ENCODE measurements at regions of chr17 and their contacts with region 1.

Region 1: GRCh38 chr17:16363749-16364536 is 10.7 kb upstream of the CENPV start:
- DNase-seq: peak; percentile 77
- CTCF ChIP-seq: peak; percentile 92

Region 2: DNA sequence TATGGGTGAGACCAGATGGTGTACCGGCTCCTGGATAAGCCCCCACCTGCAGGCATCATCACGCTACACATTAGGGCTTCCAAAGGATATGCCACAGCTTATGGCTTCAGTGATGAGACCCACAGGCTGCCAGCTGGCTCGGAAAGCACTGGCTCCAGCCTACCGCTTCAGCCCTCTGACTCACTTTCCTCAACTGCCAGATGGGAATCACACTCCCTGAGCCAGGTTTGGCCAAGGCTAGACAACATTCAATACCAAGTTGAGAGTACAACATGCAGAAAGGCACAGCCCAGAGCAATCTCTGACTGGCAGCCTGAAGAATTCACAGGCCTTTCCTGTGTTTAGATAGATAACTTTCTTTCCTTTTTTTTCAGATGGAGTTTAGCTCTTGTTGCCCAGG is 21.0 kb before region 1 on chr17:
- CTCF ChIA-PET with region 1: interaction called, 112 read pairs
- POLR2A ChIA-PET with region 1: no interaction called
- DNase-seq: no peak
- CTCF ChIP-seq: no peak

Region 3: DNA sequence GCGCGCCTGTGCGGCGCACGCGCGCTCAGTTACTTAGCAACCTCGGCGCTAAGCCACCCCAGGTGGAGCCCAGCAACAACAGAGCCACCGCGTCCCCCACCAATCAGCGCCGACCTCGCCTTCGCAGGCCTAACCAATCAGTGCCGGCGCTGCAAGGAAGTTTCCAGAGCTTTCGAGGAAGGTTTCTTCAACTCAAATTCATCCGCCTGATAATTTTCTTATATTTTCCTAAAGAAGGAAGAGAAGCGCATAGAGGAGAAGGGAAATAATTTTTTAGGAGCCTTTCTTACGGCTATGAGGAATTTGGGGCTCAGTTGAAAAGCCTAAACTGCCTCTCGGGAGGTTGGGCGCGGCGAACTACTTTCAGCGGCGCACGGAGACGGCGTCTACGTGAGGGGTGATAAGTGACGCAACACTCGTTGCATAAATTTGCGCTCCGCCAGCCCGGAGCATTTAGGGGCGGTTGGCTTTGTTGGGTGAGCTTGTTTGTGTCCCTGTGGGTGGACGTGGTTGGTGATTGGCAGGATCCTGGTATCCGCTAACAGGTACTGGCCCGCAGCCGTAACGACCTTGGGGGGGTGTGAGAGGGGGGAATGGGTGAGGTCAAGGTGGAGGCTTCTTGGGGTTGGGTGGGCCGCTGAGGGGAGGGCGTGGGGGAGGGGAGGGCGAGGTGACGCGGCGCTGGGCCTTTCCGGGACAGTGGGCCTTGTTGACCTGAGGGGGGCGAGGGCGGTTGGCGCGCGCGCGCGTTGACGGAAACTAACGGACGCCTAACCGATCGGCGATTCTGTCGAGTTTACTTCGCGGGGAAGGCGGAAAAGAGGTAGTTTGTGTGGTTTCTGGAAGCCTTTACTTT is 16.9 kb after region 1 on chr17 and contains the start of gene UBB:
- CTCF ChIA-PET with region 1: interaction called, 43 read pairs
- POLR2A ChIA-PET with region 1: interaction called, 12 read pairs
- DNase-seq: peak; percentile 94
- CTCF ChIP-seq: peak; percentile 6

Region 4: GRCh38 chr17:16391451-16391850 is 27.5 kb after region 1 on chr17:
- CTCF ChIA-PET with region 1: no interaction called
- POLR2A ChIA-PET with region 1: no interaction called
- DNase-seq: no peak
- CTCF ChIP-seq: no peak

Region 5: GRCh38 chr17:16415031-16415924 is 51.3 kb after region 1 on chr17 and contains the start of gene TRPV2:
- CTCF ChIA-PET with region 1: interaction called, 69 read pairs
- POLR2A ChIA-PET with region 1: interaction called, 5 read pairs
- DNase-seq: peak; percentile 78
- CTCF ChIP-seq: peak; percentile 86

Region 6: GRCh38 chr17:16449121-16449570 is 85.2 kb after region 1 on chr17:
- CTCF ChIA-PET with region 1: interaction called, 22 read pairs
- POLR2A ChIA-PET with region 1: interaction called, 3 read pairs
- DNase-seq: no peak
- CTCF ChIP-seq: no peak

Region 7: DNA sequence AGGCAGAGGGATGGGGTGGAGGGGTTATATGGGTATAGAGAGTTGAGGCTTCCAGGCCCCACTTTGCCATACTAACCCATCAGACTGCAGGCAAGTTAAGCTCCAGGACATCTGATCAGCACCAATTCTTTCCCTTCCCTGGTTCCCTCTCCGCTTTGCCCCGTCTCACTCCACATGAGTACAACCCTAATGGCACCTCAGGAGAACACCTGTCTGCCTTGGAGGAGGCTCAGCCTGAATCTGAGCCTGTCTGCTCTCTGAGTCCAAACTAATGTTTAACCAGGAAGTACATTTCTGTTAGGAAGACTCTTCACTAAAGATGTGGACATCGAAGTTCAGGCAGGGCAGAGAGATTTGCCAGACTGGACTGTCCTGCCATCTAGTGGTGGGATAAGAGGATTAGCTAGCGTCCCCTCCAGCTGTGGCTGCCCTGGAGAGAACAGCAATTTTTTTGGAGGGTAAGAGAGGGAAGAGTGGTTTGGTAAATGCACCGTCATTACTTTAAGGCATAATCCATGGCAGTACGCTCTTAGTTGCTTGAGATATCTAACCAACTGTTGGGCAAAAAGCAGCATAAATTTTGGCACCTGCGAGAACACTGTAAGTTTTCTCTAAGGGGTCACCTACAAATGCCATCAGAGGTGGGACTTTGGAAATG is 157.3 kb after region 1 on chr17:
- CTCF ChIA-PET with region 1: interaction called, 102 read pairs
- POLR2A ChIA-PET with region 1: no interaction called
- DNase-seq: peak; percentile 86
- CTCF ChIP-seq: peak; percentile 77

Region 8: GRCh38 chr17:16589097-16589969 is 225.4 kb after region 1 on chr17:
- CTCF ChIA-PET with region 1: interaction called, 11 read pairs
- POLR2A ChIA-PET with region 1: no interaction called
- DNase-seq: peak; percentile 97
- CTCF ChIP-seq: peak; percentile 98

Measured in GM10248 (cell line).